Caco-2 (cell line): ENCODE measurements at regions of chr19 and their contacts with region 1.

Region 1: DNA sequence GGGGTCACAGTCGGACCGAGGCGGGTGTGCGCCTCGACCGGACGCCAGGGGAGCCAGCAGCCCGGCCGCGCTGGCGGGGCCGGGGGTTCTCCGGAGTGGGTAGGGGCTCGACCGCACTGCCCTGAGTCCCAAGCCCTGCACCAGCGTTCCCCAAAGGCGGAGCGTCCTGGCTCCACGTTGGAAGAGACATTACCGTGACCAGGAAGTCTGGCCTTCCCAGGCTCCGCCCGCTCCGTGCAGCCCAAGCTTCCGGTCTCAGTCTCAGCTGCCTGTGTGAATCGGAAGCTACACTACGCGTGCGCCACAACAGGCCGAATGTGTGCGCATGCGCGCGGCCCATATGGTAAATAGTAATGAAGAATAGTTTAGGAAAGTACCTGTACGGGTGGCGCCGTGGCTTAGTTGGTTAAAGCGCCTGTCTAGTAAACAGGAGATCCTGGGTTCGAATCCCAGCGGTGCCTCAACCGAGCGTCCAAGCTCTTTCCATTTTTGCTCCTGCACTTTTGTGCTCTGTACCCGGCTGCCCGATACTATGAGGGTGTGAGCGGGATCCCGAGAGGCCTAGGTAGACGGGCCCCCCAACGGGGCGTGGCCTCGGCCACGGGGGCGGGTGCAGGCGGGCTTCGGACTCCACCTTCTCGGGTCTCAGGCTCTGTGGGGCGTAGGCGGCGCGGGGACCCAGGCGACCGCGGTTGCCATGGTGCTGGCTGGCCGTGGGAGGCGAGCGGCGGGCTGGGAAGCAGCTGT is 17.3 kb upstream of the LRP3 start:
- DNase-seq: peak; percentile 99 to 100
- H3K4me3 ChIP-seq: peak overlapping the region; percentile 79
- H3K4me3 Mint-ChIP-seq: peak overlapping the region; percentile 94
- H3K27ac Mint-ChIP-seq: peak overlapping the region; percentile 98
- H3K4me1 ChIP-seq: 0 out of 2 replicates have a peak, but pooled peaks cover 5% of the 10 kb centered on the region
- H3K4me1 Mint-ChIP-seq: peaks cover 13% of the 10 kb centered on the region
- H3K27me3 ChIP-seq: no peaks in the 10 kb centered on the region
- H3K27me3 Mint-ChIP-seq: peaks cover 5% of the 10 kb centered on the region
- CTCF ChIP-seq: peak in 1 of 2 experiments; percentile 24

Region 2: GRCh38 chr19:32837531-32837930 is 339.3 kb before region 1 on chr19:
- CTCF ChIA-PET with region 1: no interaction called
- POLR2A ChIA-PET with region 1: interaction called, 13 read pairs
- intact Hi-C with region 1: no loop called
- DNase-seq: no peak
- H3K4me3 ChIP-seq: no peak overlapping the region
- H3K4me3 Mint-ChIP-seq: no peak overlapping the region
- H3K27ac Mint-ChIP-seq: no peak overlapping the region
- H3K4me1 ChIP-seq: no peaks in the 10 kb centered on the region
- H3K4me1 Mint-ChIP-seq: no peaks in the 10 kb centered on the region
- H3K27me3 ChIP-seq: no peaks in the 10 kb centered on the region
- H3K27me3 Mint-ChIP-seq: no peaks in the 10 kb centered on the region
- CTCF ChIP-seq: no peak

Region 3: GRCh38 chr19:33054623-33055022 is 122.2 kb before region 1 on chr19:
- CTCF ChIA-PET with region 1: no interaction called
- POLR2A ChIA-PET with region 1: no interaction called
- intact Hi-C with region 1: no loop called
- DNase-seq: no peak
- H3K4me3 ChIP-seq: no peak overlapping the region
- H3K4me3 Mint-ChIP-seq: no peak overlapping the region
- H3K27ac Mint-ChIP-seq: peak overlapping the region; percentile 35
- H3K4me1 ChIP-seq: peaks cover 40% of the 10 kb centered on the region
- H3K4me1 Mint-ChIP-seq: peaks cover 29% of the 10 kb centered on the region
- H3K27me3 ChIP-seq: no peaks in the 10 kb centered on the region
- H3K27me3 Mint-ChIP-seq: no peaks in the 10 kb centered on the region
- CTCF ChIP-seq: no peak

Region 4: GRCh38 chr19:33125929-33126388 is 50.9 kb before region 1 on chr19:
- CTCF ChIA-PET with region 1: interaction called, 9 read pairs
- POLR2A ChIA-PET with region 1: interaction called, 6 read pairs
- intact Hi-C with region 1: loop called (anchors 2 kb)
- DNase-seq: peak in 1 of 2 experiments; percentile 66
- H3K4me3 ChIP-seq: no peak overlapping the region
- H3K4me3 Mint-ChIP-seq: no peak overlapping the region
- H3K27ac Mint-ChIP-seq: no peak overlapping the region
- H3K4me1 ChIP-seq: peaks cover 8% of the 10 kb centered on the region
- H3K4me1 Mint-ChIP-seq: peaks cover 10% of the 10 kb centered on the region
- H3K27me3 ChIP-seq: no peaks in the 10 kb centered on the region
- H3K27me3 Mint-ChIP-seq: no peaks in the 10 kb centered on the region
- CTCF ChIP-seq: peak; percentile 88 to 91

Region 5: GRCh38 chr19:33161201-33161600 is 15.6 kb before region 1 on chr19:
- CTCF ChIA-PET with region 1: interaction called, 4 read pairs
- POLR2A ChIA-PET with region 1: interaction called, 15 read pairs
- intact Hi-C with region 1: no loop called
- DNase-seq: no peak
- H3K4me3 ChIP-seq: no peak overlapping the region
- H3K4me3 Mint-ChIP-seq: no peak overlapping the region
- H3K27ac Mint-ChIP-seq: no peak overlapping the region
- H3K4me1 ChIP-seq: no peaks in the 10 kb centered on the region
- H3K4me1 Mint-ChIP-seq: no peaks in the 10 kb centered on the region
- H3K27me3 ChIP-seq: no peaks in the 10 kb centered on the region
- H3K27me3 Mint-ChIP-seq: no peaks in the 10 kb centered on the region
- CTCF ChIP-seq: no peak

Region 6: DNA sequence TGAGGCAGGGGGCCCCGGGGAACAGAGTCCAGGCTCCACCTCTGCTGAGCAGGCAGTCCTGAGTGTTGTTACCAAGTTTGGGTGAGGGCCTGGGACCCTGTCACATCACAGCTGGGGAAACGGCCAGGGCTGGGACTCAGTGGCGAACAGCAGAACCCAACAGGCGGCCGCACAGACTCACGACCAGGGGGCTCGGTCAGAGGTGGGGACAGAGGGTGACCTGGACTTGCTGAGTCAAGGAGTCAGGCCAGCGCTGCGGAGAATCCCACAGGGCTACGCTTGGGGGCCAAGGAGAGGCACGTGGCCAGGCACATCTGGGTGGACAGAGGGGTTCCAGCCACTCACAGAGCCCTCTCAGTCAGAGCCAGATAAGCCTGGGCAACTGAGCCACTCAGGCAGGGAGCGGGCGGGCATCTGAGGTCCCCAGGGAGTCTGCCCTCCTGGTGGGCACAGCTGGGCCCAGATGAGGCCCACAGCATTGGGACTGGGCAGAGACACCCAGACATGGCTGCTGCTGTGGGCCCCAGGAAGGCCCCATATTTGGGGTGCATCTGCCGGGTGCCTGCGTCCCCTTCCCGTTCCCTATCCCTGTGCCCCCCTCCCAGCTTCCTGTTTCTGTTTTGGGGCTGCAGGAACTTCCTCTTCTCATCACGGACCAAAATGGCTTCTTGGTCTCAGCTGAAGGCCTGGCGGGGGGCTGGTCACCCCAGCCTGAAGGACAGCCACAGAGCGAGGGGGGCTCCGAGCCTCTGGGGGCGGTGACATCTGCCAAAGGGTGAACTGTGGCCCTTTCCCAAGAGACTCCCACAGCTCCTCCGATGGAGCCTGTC is 91.5 kb after region 1 on chr19:
- CTCF ChIA-PET with region 1: no interaction called
- POLR2A ChIA-PET with region 1: no interaction called
- intact Hi-C with region 1: no loop called
- DNase-seq: no peak
- H3K4me3 ChIP-seq: no peak overlapping the region
- H3K4me3 Mint-ChIP-seq: no peak overlapping the region
- H3K27ac Mint-ChIP-seq: no peak overlapping the region
- H3K4me1 ChIP-seq: peaks cover 3% of the 10 kb centered on the region
- H3K4me1 Mint-ChIP-seq: peaks cover 6% of the 10 kb centered on the region
- H3K27me3 ChIP-seq: no peaks in the 10 kb centered on the region
- H3K27me3 Mint-ChIP-seq: no peaks in the 10 kb centered on the region
- CTCF ChIP-seq: no peak

Region 7: DNA sequence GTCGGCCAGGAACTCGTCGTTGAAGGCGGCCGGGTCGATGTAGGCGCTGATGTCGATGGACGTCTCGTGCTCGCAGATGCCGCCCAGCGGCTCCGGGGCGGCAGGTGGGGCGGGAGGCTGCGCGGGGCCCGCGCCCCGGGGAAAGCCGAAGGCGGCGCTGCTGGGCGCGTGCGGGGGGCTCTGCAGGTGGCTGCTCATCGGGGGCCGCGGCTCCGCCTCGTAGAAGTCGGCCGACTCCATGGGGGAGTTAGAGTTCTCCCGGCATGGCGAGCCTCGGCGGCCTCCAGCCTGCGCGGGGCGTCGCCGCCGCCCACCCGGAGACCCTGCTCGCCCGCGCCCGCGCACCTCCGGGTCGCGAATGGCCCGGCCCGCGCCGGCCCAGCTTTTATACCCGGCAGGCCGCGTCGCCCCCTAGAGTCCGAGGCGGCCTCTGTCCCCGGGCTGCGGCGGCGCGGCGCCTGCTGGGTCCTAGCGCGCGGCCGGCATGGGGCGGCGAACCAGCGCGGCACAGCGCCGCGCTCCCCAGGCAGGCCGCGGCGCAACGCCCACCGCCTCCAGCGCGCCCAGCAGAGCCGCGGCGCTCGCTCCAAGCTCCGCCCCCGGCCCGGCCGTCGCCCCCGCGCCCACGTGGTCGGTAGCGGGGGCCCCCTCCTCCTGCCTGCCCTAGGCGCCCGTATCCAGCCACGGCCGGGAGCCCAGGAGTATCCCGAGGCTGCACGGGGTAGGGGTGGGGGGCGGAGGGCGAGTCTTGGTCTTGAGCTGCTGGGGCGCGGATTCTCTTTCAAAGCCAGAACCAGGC is 125.5 kb after region 1 on chr19 and contains the start of gene CEBPA:
- CTCF ChIA-PET with region 1: interaction called, 8 read pairs
- POLR2A ChIA-PET with region 1: interaction called, 8 read pairs
- intact Hi-C with region 1: loop called (anchors 5 kb)
- DNase-seq: peak; percentile 90 to 97
- H3K4me3 ChIP-seq: peak within 1 kb of the TSS; percentile 87
- H3K4me3 Mint-ChIP-seq: peak within 1 kb of the TSS; percentile 85
- H3K27ac Mint-ChIP-seq: peak within 1 kb of the TSS; percentile 73
- H3K4me1 ChIP-seq: peaks cover 55% of the 10 kb centered on the region
- H3K4me1 Mint-ChIP-seq: peaks cover 49% of the 10 kb centered on the region
- H3K27me3 ChIP-seq: no peaks in the 10 kb centered on the region
- H3K27me3 Mint-ChIP-seq: no peaks in the 10 kb centered on the region
- CTCF ChIP-seq: peak; percentile 63 to 75
- total RNA-seq, gene CEBPA: 97.9 and 110 TPM in 2 replicates

Region 8: GRCh38 chr19:33332248-33332647 is 155.4 kb after region 1 on chr19:
- CTCF ChIA-PET with region 1: no interaction called
- POLR2A ChIA-PET with region 1: no interaction called
- intact Hi-C with region 1: no loop called
- DNase-seq: no peak
- H3K4me3 ChIP-seq: no peak overlapping the region
- H3K4me3 Mint-ChIP-seq: no peak overlapping the region
- H3K27ac Mint-ChIP-seq: no peak overlapping the region
- H3K4me1 ChIP-seq: peaks cover 8% of the 10 kb centered on the region; the same call in 1 of the 2 replicates
- H3K4me1 Mint-ChIP-seq: peaks cover 16% of the 10 kb centered on the region
- H3K27me3 ChIP-seq: no peaks in the 10 kb centered on the region
- H3K27me3 Mint-ChIP-seq: no peaks in the 10 kb centered on the region
- CTCF ChIP-seq: no peak